A549 (cell line): ENCODE measurements at regions of chr12 and their contacts with region 1.

Region 1: DNA sequence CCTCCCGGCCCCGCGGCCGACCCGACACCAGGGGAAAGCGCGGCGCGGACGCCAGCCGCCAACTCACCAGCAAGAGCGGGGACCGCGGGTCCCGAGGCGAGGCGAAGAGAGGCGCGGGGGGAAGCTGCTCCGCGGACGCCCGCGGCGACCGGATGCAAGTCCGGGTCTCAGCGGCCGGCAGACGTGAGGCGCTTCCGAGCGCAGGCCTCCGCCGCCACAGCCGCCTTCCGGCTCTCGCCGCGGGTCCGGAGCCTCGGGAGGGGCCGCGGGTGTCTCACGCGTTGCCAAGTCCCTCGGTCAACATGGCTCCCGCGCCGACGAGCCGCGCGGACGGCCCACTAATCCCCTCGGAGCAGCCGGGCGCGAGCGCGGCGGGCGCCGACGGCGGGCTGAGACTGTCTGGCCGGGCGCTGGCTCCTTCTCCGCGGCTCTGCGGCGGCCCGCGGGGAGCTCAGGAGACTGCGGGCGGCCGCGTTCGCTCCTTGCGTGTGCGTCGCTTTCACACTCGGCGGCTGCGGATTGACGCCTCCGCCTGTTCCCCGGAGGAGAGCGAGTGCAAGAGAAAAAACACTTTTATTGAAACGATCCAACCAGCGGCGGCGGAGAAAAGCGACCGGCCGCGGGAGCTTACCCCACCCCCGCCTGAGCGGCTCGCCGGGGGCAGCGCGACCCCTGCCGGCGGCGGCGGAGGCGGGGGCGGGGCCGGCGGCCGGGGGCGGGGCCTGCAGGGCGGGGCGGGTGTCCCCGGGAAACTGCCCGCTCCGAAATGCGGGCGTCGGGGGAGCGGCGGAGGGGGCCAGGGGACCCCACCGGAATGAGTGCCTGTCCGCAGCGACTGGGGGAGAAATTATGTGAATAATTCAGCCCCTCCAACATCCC is at the start of gene CDK17:
- DNase-seq: peak; percentile 78 to 86
- ATAC-seq: peak; percentile 66 to 77
- H3K4me3 ChIP-seq: peak within 1 kb of the TSS; percentile 90
- H3K27ac ChIP-seq: peak within 1 kb of the TSS; percentile 96
- H3K4me1 ChIP-seq: peaks cover 33% of the 10 kb centered on the region
- CTCF ChIP-seq: peak; percentile 90
- EP300 ChIP-seq: no peak
- POLR2A ChIP-seq: peak; percentile 47
- RAD21 ChIP-seq: peak; percentile 43 to 79
- polyA plus RNA-seq, gene CDK17: 34.5 and 43.5 TPM in 2 replicates

Region 2: GRCh38 chr12:96314723-96315122 is 85.4 kb before region 1 on chr12:
- CTCF ChIA-PET with region 1: no interaction called
- POLR2A ChIA-PET with region 1: no interaction called
- DNase-seq: no peak
- ATAC-seq: no peak
- H3K4me3 ChIP-seq: no peak overlapping the region
- H3K27ac ChIP-seq: no peak overlapping the region
- H3K4me1 ChIP-seq: peaks cover 4% of the 10 kb centered on the region; the same call in 1 of the 3 replicates
- CTCF ChIP-seq: no peak
- EP300 ChIP-seq: no peak
- POLR2A ChIP-seq: no peak
- RAD21 ChIP-seq: no peak

Region 3: DNA sequence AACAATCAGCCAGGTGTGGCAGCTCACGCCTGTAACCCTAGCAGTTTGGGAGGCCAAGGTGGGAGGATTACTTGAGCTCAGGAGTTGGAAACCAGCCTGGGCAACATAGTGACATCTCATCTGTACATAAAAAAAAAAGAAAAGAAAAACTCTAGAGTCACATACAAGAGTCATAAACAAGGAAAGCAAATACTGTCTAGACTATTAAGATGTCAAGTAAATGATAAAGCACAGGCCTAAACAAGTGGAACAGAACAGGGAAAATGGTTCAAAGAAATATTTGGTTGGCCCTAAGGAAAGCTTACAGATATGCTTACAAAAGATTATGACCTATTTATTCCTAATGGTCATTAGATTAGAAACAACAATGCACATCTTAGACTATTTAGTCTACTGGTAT is 12.2 kb before region 1 on chr12:
- CTCF ChIA-PET with region 1: interaction called, 20 read pairs
- POLR2A ChIA-PET with region 1: interaction called, 4 read pairs
- DNase-seq: no peak
- ATAC-seq: no peak
- H3K4me3 ChIP-seq: no peak overlapping the region
- H3K27ac ChIP-seq: no peak overlapping the region
- H3K4me1 ChIP-seq: peaks cover 4% of the 10 kb centered on the region; the same call in 1 of the 3 replicates
- CTCF ChIP-seq: no peak
- EP300 ChIP-seq: no peak
- POLR2A ChIP-seq: no peak
- RAD21 ChIP-seq: no peak

Region 4: GRCh38 chr12:96427269-96427729 is 27.1 kb after region 1 on chr12:
- CTCF ChIA-PET with region 1: interaction called, 10 read pairs
- POLR2A ChIA-PET with region 1: no interaction called
- DNase-seq: peak; percentile 55 to 83
- ATAC-seq: peak; percentile 92 to 96
- H3K4me3 ChIP-seq: no peak overlapping the region
- H3K27ac ChIP-seq: peak overlapping the region; percentile 78 to 83
- H3K4me1 ChIP-seq: peaks cover 32% of the 10 kb centered on the region
- CTCF ChIP-seq: no peak
- EP300 ChIP-seq: no peak
- POLR2A ChIP-seq: no peak
- RAD21 ChIP-seq: no peak

Region 5: DNA sequence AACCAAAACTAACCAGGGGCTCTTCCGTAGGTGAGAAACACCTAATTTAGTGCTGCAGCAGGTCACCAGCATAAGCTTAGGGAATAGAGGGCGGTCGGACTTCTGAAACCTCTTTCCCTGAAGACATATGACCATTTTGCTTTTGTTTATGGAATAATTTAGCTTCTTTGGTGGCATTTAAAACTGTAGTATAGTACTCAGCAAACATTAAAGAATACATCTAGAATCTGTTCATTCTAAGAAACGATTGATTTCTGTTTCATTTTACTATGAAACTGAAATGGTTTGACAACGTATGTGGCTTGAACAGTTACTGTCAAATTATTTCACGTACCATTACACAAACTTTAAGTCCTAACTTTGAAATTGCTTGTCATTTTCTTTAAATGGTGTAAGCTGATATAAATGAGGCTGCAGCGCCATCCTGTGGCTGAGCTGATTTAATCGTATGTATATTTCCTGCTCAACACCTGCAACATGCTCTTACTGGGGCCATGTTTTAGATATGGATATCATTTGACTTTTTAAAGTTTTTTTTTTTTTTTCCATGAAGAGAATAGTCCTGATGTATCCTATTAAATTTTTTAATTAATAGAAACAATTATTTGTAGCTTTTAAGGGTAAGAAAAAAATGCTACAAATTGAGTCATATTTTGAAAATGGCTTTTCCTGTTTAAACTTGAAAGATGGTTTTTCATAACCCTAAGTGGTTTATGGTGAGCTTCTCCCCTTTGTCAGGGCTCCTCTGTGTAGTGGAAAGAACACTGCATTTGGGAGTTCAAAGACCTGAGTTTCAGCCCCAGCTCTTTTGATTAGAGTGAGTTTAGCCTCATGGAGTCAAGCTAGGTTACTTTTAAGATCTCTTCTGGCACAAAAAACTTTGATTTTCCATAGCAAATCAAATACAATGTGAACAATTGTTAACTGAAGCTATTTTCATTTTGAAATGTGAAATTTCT is 116.6 kb after region 1 on chr12:
- CTCF ChIA-PET with region 1: interaction called, 32 read pairs
- POLR2A ChIA-PET with region 1: interaction called, 5 read pairs
- DNase-seq: peak; percentile 56 to 84
- ATAC-seq: peak; percentile 80 to 90; a peak in 5 of 6 replicates
- H3K4me3 ChIP-seq: no peak overlapping the region
- H3K27ac ChIP-seq: no peak overlapping the region
- H3K4me1 ChIP-seq: peaks cover 9% of the 10 kb centered on the region; the same call in 1 of the 3 replicates
- CTCF ChIP-seq: peak; percentile 90
- EP300 ChIP-seq: no peak
- POLR2A ChIP-seq: no peak
- RAD21 ChIP-seq: peak; percentile 94 to 95